Activated CD4-positive, alpha-beta T cell treated with anti-CD3 and anti-CD28 coated beads, Interleukin-2, amount 10 ng/mL, durations not matched to agents 24 days and 14 days (primary cell): ENCODE measurements at regions of chr4 and their contacts with region 1.

Region 1: GRCh38 chr4:37686373-37687193 is at the start of gene RELL1:
- DNase-seq: peak; percentile 100
- H3K4me3 Mint-ChIP-seq: peak within 1 kb of the TSS; percentile 91
- H3K27ac Mint-ChIP-seq: peak within 1 kb of the TSS; percentile 96
- H3K4me1 Mint-ChIP-seq: peaks cover 36% of the 10 kb centered on the region
- H3K27me3 Mint-ChIP-seq: peaks cover 8% of the 10 kb centered on the region
- total RNA-seq, gene RELL1: 15.7 and 19.1 TPM in 2 replicates

Region 2: GRCh38 chr4:36322921-36323354 is 1363.6 kb before region 1 on chr4:
- intact Hi-C with region 1: loop called (anchors 5 kb)
- DNase-seq: peak; percentile 90
- H3K4me3 Mint-ChIP-seq: peak overlapping the region; percentile 21
- H3K27ac Mint-ChIP-seq: peak overlapping the region; percentile 93
- H3K4me1 Mint-ChIP-seq: peaks cover 71% of the 10 kb centered on the region
- H3K27me3 Mint-ChIP-seq: no peaks in the 10 kb centered on the region

Region 3: GRCh38 chr4:36651253-36651652 is 1035.3 kb before region 1 on chr4:
- intact Hi-C with region 1: no loop called
- DNase-seq: no peak
- H3K4me3 Mint-ChIP-seq: no peak overlapping the region
- H3K27ac Mint-ChIP-seq: no peak overlapping the region
- H3K4me1 Mint-ChIP-seq: peaks cover 5% of the 10 kb centered on the region
- H3K27me3 Mint-ChIP-seq: peaks cover 2% of the 10 kb centered on the region

Region 4: DNA sequence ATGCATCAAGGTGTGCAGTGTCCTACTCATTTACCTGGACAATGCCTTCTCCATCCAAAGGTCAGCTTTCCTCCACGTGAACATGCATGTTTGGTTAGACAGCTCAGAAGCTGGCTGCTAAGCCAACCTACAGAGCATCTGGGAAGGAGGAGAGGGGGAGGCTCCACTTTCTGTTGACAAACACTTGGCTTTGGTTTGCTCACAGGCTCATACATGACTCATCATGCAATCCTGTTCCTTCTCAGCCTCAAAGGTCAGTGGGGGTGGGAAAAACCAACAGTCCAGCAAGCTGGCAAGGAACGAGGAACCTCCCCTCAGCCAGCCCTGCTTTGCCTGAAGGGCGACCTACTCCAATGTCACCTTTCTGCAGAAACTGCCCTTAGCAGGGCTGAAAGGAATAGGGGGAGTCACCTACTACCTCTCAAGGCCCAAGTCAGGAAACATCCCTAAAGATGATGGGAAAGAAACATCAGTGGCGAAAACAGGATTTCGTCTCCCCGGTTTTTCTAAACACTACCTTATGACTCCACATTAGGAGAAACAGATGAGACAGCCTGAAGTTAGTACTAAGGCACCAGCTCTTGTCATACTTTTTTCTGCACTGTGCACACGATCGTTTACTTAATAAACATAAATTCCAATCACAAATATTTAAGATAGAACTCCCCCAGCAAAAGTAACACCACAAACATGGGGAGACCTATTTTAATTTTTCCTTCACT is 38.3 kb before region 1 on chr4:
- intact Hi-C with region 1: loop called (anchors 5 kb)
- DNase-seq: no peak
- H3K4me3 Mint-ChIP-seq: no peak overlapping the region
- H3K27ac Mint-ChIP-seq: no peak overlapping the region
- H3K4me1 Mint-ChIP-seq: peaks cover 19% of the 10 kb centered on the region
- H3K27me3 Mint-ChIP-seq: no peaks in the 10 kb centered on the region

Region 5: DNA sequence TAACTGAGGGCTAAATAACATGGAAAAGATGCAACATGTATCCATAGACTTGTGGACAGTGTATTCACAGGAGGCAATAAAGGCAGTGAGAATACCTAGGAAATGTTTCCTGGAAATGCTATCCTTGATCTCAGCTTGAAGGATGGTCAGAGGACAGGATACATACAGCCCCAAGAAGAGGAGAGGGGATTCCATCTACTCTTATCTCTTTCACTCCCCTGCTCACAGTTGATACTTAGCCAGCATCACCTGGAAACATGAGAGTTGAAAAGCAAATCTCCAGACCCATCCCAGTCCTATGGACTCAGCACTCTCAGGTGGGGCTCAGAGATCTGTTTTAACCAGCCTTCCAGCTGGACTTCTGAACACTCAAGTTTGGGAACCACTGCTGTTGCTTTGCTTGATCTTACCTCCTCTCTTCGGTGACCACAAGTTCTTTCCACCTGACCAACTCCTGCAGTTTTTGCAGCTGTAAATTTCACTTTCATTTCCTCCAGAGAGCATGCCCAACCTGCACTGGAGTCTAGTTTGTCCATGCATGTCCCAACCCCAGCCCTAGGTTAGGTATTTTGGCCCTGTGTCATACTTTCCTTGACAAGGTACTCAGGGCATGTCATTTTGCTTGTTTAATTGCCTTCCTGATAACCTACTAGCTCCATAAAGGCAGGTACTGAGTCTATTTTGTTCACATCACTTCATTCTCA is 10.8 kb before region 1 on chr4:
- intact Hi-C with region 1: loop called (anchors 1 kb)
- DNase-seq: peak; percentile 87
- H3K4me3 Mint-ChIP-seq: peak overlapping the region; percentile 80
- H3K27ac Mint-ChIP-seq: peak overlapping the region; percentile 86
- H3K4me1 Mint-ChIP-seq: peaks cover 67% of the 10 kb centered on the region
- H3K27me3 Mint-ChIP-seq: no peaks in the 10 kb centered on the region

Region 6: GRCh38 chr4:37826295-37827029 is 139.9 kb after region 1 on chr4 and contains the start of gene PGM2:
- intact Hi-C with region 1: loop called (anchors 1 kb)
- DNase-seq: peak; percentile 98
- H3K4me3 Mint-ChIP-seq: peak within 1 kb of the TSS; percentile 95
- H3K27ac Mint-ChIP-seq: peak within 1 kb of the TSS; percentile 91
- H3K4me1 Mint-ChIP-seq: peaks cover 32% of the 10 kb centered on the region
- H3K27me3 Mint-ChIP-seq: peaks cover 1% of the 10 kb centered on the region
- total RNA-seq, gene PGM2: 53.4 and 55.1 TPM in 2 replicates

Region 7: DNA sequence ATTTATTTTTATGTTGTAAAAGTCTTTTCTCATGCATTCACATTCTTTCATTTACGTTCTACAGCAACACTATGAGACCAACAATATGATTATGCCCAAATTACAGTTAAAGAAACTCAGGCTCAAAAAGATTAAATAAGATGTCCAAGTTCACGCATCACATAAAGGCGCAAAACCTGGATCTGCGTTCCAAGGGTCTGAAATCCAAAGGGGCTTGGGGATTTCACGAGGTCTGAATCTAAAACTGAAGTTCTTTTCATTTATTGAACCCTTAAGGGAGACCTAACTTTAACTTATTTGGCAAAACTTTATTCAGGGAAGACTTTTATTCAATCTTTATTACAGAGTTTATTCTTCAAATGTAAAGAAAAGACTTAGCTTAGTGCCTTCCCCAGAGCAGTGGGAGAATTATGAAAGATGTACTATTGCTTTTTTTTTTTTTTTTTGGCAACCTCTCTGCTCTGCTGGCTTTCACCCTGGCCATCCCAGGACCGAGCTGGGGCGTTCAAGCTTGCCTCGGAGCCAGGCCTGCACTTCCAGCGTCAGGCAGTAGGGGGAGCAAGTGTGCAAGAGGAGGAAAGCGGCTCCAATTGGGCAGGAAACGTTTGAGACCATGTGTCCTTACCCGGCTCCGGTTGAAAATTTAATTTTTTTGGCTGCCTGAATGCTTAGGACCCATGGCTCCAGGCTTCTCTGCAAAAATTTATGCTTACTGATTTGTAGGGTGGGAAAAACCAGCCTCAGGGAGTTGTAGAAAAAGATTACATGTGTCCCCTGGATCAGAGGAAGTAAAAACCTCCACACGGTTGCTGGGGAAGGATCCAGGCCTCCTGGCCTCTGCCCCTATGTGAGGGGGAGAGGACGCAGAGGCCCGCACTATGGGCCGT is 633.1 kb after region 1 on chr4:
- intact Hi-C with region 1: loop called (anchors 10 kb)
- DNase-seq: peak; percentile 97
- H3K4me3 Mint-ChIP-seq: peak overlapping the region; percentile 77
- H3K27ac Mint-ChIP-seq: peak overlapping the region; percentile 81
- H3K4me1 Mint-ChIP-seq: peaks cover 29% of the 10 kb centered on the region
- H3K27me3 Mint-ChIP-seq: peaks cover 20% of the 10 kb centered on the region